MCF 10A (cell line): ENCODE measurements at regions of chr2 and their contacts with region 1.

Region 1: DNA sequence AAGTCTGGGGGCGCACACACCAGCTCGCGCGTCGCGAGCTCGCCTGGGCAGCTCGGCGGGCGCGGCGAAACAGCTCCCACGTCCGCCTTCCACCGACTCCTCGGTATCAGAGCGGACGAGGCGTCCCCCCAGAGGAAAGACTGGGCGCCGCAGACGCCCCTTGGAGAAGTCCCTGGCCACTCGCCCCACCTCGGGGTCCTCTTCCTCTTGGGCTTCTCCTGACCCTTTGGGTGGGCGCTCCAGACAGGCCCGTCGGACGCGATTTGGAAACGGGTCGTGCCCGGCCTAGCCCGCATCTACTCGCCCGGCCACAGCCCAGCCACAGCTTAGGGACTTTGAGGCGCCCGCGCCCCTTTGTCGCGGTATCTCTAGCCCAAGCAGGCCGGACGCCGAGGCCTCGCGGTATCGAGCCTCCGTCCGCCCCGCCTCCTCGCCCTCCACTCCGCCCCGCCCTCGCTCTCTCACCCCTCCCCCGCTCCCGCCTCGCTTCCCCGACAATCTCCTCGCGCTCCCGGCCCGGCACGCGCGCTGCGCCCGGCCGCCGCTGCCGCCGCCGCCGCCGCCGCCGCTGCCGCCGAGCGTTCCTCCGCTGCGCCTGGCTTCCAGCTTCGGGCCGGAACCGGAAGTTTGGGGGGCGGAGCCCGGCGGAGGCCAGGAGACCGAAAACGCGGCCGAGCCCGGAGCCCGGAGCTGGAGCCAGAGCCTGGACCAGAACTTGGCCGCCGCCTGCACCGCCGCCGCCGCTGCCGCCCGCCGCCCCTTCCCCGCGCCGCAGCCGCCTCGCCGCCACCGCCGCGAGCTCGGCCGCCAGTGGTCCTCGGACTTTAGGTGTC is 749 bp upstream of the ACVR2A start:
- DNase-seq: peak; percentile 86
- H3K4me3 Mint-ChIP-seq: peak overlapping the region; percentile 92
- H3K27ac Mint-ChIP-seq: peak overlapping the region; percentile 89
- H3K4me1 Mint-ChIP-seq: peaks cover 18% of the 10 kb centered on the region
- H3K27me3 Mint-ChIP-seq: no peaks in the 10 kb centered on the region
- CTCF ChIP-seq: no peak

Region 2: GRCh38 chr2:147855977-147856376 is 11.9 kb after region 1 on chr2:
- CTCF ChIA-PET with region 1: no interaction called
- POLR2A ChIA-PET with region 1: interaction called, 20 read pairs
- intact Hi-C with region 1: no loop called
- DNase-seq: no peak
- H3K4me3 Mint-ChIP-seq: no peak overlapping the region
- H3K27ac Mint-ChIP-seq: no peak overlapping the region
- H3K4me1 Mint-ChIP-seq: peaks cover 30% of the 10 kb centered on the region
- H3K27me3 Mint-ChIP-seq: no peaks in the 10 kb centered on the region
- CTCF ChIP-seq: no peak